Transverse colon (tissue), 4 donors: ENCODE measurements at regions of chr2 and their contacts with region 1.

Region 1: GRCh38 chr2:27217217-27218121 is at the start of gene CAD:
- DNase-seq: peak; percentile 90
- H3K4me3 ChIP-seq: peak within 1 kb of the TSS; percentile 54 to 63 (median 56)
- H3K27ac ChIP-seq: peak within 1 kb of the TSS; percentile 70 to 81 (median 78)
- H3K4me1 ChIP-seq: peaks cover 15 to 27% (median 18%) of the 10 kb centered on the region in 4 donors
- H3K27me3 ChIP-seq: no peaks in the 10 kb centered on the region
- CTCF ChIP-seq: peak; percentile 16 to 54 (median 29)
- EP300 ChIP-seq: no peak
- POLR2A ChIP-seq: peak; percentile 48
- total RNA-seq, gene CAD: 11.9 to 25.9 (median 16.6) TPM

Region 2: GRCh38 chr2:27123302-27124231 is 93.9 kb before region 1 on chr2 and contains the start of gene ABHD1:
- in situ Hi-C with region 1: loop called in 1 of 4 experiments (anchors 25 kb)
- intact Hi-C with region 1: no loop called
- DNase-seq: peak; percentile 77
- H3K4me3 ChIP-seq: peak within 1 kb of the TSS; percentile 3 to 61 (median 40)
- H3K27ac ChIP-seq: peak within 1 kb of the TSS in 3 of 4 donors; percentile 7 to 38 (median 8)
- H3K4me1 ChIP-seq: peaks cover under 1 to 10% (median 7%) of the 10 kb centered on the region in 4 donors
- H3K27me3 ChIP-seq: peaks cover 26% of the 10 kb centered on the region
- CTCF ChIP-seq: no peak
- EP300 ChIP-seq: no peak
- POLR2A ChIP-seq: peak; percentile 32
- total RNA-seq, gene ABHD1: 0.48 TPM in 1 of 4 donors, not detected in the others

Region 3: DNA sequence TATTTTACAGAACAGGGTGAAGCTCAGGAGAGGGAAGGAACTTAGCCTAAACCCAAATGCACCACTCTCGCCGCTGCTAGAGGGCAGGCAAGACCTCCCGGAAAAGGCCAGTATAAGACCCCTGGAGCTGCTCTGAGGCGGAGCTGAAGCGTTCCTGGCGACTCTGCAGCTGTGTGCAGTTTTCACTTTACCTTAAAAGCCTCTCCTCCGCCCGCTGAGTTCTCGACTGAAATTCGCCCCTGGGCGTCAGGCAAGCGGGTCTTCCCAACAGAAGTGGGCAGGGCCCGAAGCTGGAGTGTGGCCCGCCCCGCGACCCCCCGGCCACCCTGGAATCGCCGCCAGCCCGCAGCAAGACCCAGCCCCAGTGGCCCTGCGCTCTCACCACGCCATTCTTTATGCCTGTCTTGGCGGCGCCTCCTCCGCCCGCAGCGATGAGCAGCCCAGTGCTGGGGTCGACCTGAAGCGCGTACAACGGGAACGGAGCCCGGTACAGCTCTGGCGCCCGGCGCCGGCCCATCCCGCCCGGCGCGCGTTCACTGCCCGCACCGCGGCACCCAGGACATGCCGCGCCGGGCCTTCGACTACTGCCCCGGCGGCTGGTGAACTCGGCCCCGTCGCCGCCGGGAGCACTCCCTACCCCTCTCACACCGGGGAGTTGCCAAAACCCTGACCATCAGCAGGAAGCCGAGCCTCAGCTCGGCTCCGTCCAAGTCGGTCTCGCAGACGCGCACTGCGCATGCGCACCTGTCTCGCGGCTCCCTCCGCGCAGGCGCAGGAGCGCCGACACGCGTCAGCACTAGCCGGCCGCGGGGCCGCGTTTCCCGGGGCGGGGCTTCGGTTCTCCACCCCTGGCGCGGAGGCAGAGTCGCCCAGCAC is 83.3 kb before region 1 on chr2 and contains the start of gene PREB:
- in situ Hi-C with region 1: no loop called
- intact Hi-C with region 1: loop called (anchors 10 kb)
- DNase-seq: peak; percentile 99
- H3K4me3 ChIP-seq: peak within 1 kb of the TSS; percentile 76 to 99 (median 98)
- H3K27ac ChIP-seq: peak within 1 kb of the TSS; percentile 88 to 97 (median 96)
- H3K4me1 ChIP-seq: peaks cover 7 to 20% (median 15%) of the 10 kb centered on the region in 4 donors
- H3K27me3 ChIP-seq: no peaks in the 10 kb centered on the region
- CTCF ChIP-seq: peak in 1 of 5 experiments; percentile 3
- EP300 ChIP-seq: no peak
- POLR2A ChIP-seq: peak; percentile 90
- total RNA-seq, gene PREB: 53.2 to 105 (median 71.1) TPM

Region 4: GRCh38 chr2:27322766-27323595 is 105.5 kb after region 1 on chr2 and contains the start of gene MPV17:
- in situ Hi-C with region 1: no loop called
- intact Hi-C with region 1: no loop called
- DNase-seq: peak; percentile 94
- H3K4me3 ChIP-seq: peak within 1 kb of the TSS; percentile 71 to 76 (median 73)
- H3K27ac ChIP-seq: peak within 1 kb of the TSS; percentile 90 to 94 (median 92)
- H3K4me1 ChIP-seq: peaks cover 7 to 22% (median 18%) of the 10 kb centered on the region in 4 donors
- H3K27me3 ChIP-seq: no peaks in the 10 kb centered on the region
- CTCF ChIP-seq: no peak
- EP300 ChIP-seq: no peak
- POLR2A ChIP-seq: peak; percentile 84
- total RNA-seq, gene MPV17: 34.4 to 53.8 (median 38.3) TPM

Region 5: DNA sequence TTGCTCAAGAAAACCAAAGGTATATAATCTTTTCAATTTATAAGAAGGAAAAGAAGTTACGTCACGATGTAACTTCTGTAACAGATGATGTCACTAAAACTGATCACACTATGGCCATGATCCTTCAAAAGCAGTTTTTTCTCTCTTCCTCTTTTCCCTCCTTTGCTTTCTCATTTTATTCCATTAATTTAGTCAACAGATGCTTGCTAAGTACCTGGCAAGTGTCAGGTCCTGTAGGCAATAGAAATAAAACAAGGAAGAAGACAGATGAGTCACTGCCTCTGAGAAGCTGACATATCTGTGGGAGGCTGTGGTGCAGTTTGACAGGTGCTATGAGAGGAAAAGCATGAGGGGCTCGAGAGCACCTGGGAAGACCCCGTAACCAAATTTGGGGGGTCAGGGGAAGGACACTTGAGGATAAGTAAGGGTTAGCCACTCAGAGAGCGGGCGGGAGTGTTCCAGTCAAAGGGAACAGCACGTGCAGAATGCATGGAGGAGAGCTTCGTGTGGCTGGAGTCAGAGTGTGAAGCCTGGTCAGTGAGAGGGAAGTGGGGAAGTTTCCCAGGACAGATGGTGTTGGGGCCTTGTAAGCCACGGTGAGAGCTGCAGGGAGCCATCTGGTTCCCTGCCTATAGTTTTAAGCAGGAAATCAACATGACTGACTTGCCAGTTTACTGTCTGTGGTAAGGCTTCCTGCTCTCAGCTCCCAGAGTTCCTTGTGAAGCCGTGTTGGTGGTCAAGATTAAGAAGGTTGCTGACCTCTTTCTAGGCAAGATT is 976.3 kb after region 1 on chr2:
- in situ Hi-C with region 1: no loop called
- intact Hi-C with region 1: no loop called
- DNase-seq: no peak
- H3K4me3 ChIP-seq: no peak overlapping the region
- H3K27ac ChIP-seq: peak overlapping the region in 1 of 4 donors; percentile 9
- H3K4me1 ChIP-seq: peaks cover 0 to 19% (median 7%) of the 10 kb centered on the region in 4 donors
- H3K27me3 ChIP-seq: no peaks in the 10 kb centered on the region
- CTCF ChIP-seq: no peak
- EP300 ChIP-seq: no peak
- POLR2A ChIP-seq: no peak